Ovary (tissue), 10 donors: ENCODE measurements at regions of chr15 and their contacts with region 1.

Region 1: GRCh38 chr15:37219211-37219701 is 118.9 kb upstream of the MEIS2 start:
- DNase-seq: no peak
- H3K4me3 ChIP-seq: no peak overlapping the region
- H3K27ac ChIP-seq: no peak overlapping the region
- H3K4me1 ChIP-seq: no peaks in the 10 kb centered on the region
- H3K27me3 ChIP-seq: no peaks in the 10 kb centered on the region
- CTCF ChIP-seq: no peak
- EP300 ChIP-seq: no peak
- POLR2A ChIP-seq: no peak

Region 2: DNA sequence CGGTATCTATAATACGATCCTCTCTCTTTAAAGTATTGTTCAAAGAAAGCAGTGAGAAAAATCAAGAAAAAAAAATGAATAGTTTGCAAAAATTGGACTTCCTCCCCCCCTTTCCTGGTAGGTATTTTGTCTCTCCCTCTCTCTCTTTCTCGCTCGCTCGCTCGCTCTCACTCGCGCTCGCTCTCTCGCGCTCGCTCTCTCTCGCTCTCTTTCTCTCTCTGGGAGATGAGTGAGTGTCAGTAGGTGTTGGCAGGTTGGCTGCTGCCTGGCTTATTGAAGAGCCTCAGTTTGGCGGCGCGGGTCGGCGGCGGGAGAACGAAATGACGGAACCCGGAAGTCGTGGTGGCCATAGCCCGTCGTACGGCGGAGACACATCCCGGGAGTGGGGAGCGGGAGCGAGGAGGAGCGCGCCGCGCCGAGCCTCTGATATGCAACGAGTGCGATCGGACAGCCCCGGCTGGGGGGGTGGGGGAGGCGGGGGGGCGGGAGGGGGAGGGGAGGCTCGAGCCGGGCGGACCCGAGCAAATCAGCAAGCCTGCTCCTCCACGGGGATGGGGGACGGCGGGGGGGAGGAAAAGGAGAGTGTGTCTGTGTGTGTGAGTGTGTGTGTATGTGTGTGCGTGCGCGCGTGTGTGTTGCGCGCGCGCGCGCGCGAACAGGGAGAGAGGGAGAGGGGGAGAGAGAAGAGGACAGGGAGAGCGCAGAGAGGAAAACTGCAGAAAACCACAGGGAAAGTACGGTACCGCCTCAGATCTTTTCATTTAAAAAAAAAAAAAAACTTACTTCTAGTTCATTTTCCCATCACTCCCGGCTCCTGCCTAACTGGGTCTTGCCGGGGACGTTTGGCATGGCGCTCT is 118.9 kb before region 1 on chr15 and contains the start of gene MEIS2:
- intact Hi-C with region 1: no loop called
- DNase-seq: peak; percentile 94 to 95 (median 95)
- H3K4me3 ChIP-seq: peak within 1 kb of the TSS; percentile 81
- H3K27ac ChIP-seq: peak within 1 kb of the TSS; percentile 91 to 94
- H3K4me1 ChIP-seq: peaks cover 2% of the 10 kb centered on the region
- H3K27me3 ChIP-seq: no peaks in the 10 kb centered on the region
- CTCF ChIP-seq: peak in 1 of 3 donors; percentile 20
- EP300 ChIP-seq: no peak
- POLR2A ChIP-seq: peak; percentile 75
- total RNA-seq, gene MEIS2: 27.7 to 73.7 (median 47.7) TPM

Region 3: DNA sequence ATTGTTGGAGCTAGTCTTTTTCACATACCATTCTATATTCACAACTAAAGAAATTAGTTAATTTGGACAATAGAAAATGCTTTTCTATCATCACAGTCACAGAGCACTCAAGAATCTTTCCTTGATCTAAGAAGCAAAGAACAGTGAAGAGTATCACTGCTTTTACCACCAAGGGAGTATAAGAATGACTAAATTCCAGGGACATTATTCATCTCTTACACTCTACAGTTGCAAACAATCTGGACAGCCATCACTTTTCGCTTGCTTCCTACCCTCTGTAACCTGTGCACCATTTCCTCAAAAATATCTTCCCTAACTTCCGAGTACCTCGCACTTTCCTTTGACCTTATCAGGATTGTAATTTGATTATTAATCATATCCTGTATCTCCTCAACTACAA is 355.7 kb after region 1 on chr15:
- intact Hi-C with region 1: loop called in 1 of 4 experiments (anchors 5 kb)
- DNase-seq: no peak
- H3K4me3 ChIP-seq: no peak overlapping the region
- H3K27ac ChIP-seq: no peak overlapping the region
- H3K4me1 ChIP-seq: no peaks in the 10 kb centered on the region
- H3K27me3 ChIP-seq: no peaks in the 10 kb centered on the region
- CTCF ChIP-seq: no peak
- EP300 ChIP-seq: no peak
- POLR2A ChIP-seq: no peak